HAP-1 (cell line): ENCODE measurements at regions of chr1 and their contacts with region 1.

Region 1: GRCh38 chr1:8560611-8561544 is 243.0 kb downstream of the SLC45A1 start:
- DNase-seq: peak; percentile 31 to 55
- H3K4me3 ChIP-seq: no peak overlapping the region
- H3K4me1 ChIP-seq: no peaks in the 10 kb centered on the region
- H3K27me3 ChIP-seq: no peaks in the 10 kb centered on the region

Region 2: DNA sequence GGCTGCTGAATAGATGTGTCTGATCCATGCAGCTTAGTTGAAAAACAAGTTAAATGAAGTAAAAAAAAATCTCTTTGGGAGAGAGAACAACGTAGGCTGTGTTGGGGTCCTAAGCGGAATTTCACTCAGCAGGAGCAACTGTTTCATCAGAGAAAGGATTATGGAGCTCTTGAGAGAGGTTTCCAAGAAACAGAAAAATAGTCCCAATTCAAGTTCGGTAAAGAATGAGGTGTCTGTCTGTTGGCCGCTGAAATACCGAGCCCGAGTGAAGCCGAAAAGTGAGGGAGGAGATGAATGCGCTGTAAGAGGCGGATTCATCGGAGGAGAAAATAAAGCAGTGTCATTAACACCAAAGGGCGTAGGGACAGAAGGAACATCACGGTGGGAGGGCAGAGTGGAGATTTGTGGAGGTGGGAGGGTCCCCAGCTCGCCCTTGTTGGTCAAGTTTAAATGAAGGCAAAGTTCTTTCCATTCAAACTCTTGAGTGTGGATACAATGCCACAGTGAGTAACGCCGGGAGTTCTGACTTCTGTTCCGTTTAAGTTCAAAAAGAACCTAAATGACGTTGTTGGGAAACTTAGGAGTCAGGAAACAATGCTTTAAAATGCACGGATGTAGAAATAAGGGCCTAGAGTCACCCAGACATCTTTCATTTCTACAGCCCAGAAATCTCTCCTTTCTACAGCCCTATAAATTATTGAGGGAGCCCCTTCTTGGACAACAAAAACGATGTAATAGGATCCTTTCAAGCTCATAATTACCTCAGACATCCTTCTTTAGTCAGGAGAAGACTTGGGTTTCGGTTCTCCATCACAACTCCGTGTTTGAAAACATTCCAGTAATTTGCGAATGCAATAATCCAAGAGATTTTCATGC is 258.6 kb before region 1 on chr1:
- in situ Hi-C with region 1: no loop called
- DNase-seq: no peak
- H3K4me3 ChIP-seq: no peak overlapping the region
- H3K4me1 ChIP-seq: no peaks in the 10 kb centered on the region
- H3K27me3 ChIP-seq: no peaks in the 10 kb centered on the region

Region 3: GRCh38 chr1:8671306-8671917 is 110.5 kb after region 1 on chr1:
- in situ Hi-C with region 1: loop called (anchors 10 kb)
- DNase-seq: peak; percentile 54 to 66
- H3K4me3 ChIP-seq: no peak overlapping the region
- H3K4me1 ChIP-seq: peaks cover 8% of the 10 kb centered on the region
- H3K27me3 ChIP-seq: no peaks in the 10 kb centered on the region

Region 4: DNA sequence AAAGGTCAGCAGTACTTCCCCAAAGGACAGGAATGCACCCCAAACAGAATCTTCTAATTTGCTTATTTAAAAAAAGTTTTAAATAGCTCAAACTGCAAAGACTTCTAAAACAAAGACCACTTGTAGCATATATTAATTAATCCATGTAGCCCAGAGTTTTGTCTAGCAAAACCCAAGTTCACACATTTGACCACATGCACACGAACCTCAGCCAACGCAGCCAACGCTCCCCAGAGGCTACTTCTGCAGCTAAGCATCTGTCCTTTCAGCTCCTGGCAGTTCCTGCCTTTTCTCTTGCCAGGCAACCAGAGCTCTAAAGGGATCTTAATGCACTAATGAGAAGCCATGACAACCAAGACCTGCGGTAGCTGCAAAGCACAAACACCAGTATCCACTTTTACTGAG is 166.9 kb after region 1 on chr1:
- in situ Hi-C with region 1: loop called (anchors 5 kb)
- DNase-seq: no peak
- H3K4me3 ChIP-seq: no peak overlapping the region
- H3K4me1 ChIP-seq: peaks cover 7% of the 10 kb centered on the region
- H3K27me3 ChIP-seq: no peaks in the 10 kb centered on the region

Region 5: DNA sequence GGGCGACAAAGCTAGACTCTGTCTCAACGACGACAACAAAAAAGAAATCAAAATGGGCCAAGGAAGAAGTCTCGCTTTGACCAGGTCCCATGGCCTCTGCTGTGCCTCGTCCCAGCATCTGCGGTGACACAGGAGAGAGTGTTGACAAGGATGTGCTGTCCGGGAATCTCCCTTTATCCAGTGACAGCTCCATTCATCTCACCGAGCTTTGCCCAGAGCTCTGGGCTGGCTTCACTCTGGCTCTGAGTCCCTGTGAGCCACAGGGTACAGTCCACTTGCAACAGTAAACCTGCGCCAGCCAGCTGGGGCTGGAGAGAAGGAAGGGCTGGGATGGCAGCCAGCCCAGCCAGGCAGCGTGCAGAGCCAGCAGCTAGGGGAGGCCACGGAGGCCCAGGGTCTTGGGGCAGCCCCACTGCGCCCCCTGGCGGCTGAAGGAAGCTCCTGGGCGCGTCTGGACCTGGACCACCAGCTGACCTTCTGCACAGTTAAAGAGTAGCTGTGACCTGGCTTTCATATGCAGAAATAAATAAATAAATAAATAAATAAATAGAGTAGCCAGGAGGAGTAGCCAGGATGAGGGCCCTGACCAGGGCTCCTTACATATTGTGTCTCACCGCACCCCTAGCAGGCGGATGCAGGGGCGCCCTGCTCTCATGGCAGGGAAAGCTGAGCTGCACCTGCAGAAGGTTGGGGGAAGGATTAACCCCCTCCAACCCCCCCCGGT is 287.9 kb after region 1 on chr1:
- in situ Hi-C with region 1: loop called (anchors 10 kb)
- DNase-seq: peak; percentile 75 to 92
- H3K4me3 ChIP-seq: no peak overlapping the region
- H3K4me1 ChIP-seq: peaks cover 3% of the 10 kb centered on the region
- H3K27me3 ChIP-seq: no peaks in the 10 kb centered on the region